Activated B cell treated with CpG ODN at 0.5 μM for 24 hours (primary cell): ENCODE measurements at regions of chr1 and their contacts with region 1.

Region 1: GRCh38 chr1:198638894-198639635 is at the start of gene PTPRC:
- DNase-seq: no peak
- ATAC-seq: peak; percentile 78
- H3K4me3 Mint-ChIP-seq: peak within 1 kb of the TSS; percentile 87
- H3K27ac Mint-ChIP-seq: peak within 1 kb of the TSS; percentile 95
- H3K4me1 Mint-ChIP-seq: peaks cover 68% of the 10 kb centered on the region
- H3K27me3 Mint-ChIP-seq: no peaks in the 10 kb centered on the region
- CTCF ChIP-seq: no peak
- total RNA-seq, gene PTPRC: 426 and 506 TPM in 2 replicates

Region 2: GRCh38 chr1:198520524-198521254 is 118.4 kb before region 1 on chr1:
- CTCF ChIA-PET with region 1: no interaction called
- POLR2A ChIA-PET with region 1: interaction called, 10 read pairs
- intact Hi-C with region 1: loop called (anchors 1 kb)
- DNase-seq: no peak
- ATAC-seq: peak; percentile 70
- H3K4me3 Mint-ChIP-seq: peak overlapping the region; percentile 69
- H3K27ac Mint-ChIP-seq: peak overlapping the region; percentile 81
- H3K4me1 Mint-ChIP-seq: peaks cover 63% of the 10 kb centered on the region
- H3K27me3 Mint-ChIP-seq: no peaks in the 10 kb centered on the region
- CTCF ChIP-seq: no peak

Region 3: GRCh38 chr1:198549866-198550265 is 89.2 kb before region 1 on chr1:
- CTCF ChIA-PET with region 1: no interaction called
- POLR2A ChIA-PET with region 1: interaction called, 6 read pairs
- intact Hi-C with region 1: loop called (anchors 1 kb)
- DNase-seq: no peak
- ATAC-seq: peak; percentile 90
- H3K4me3 Mint-ChIP-seq: peak overlapping the region; percentile 63
- H3K27ac Mint-ChIP-seq: peak overlapping the region; percentile 89
- H3K4me1 Mint-ChIP-seq: peaks cover 67% of the 10 kb centered on the region
- H3K27me3 Mint-ChIP-seq: no peaks in the 10 kb centered on the region
- CTCF ChIP-seq: no peak

Region 4: DNA sequence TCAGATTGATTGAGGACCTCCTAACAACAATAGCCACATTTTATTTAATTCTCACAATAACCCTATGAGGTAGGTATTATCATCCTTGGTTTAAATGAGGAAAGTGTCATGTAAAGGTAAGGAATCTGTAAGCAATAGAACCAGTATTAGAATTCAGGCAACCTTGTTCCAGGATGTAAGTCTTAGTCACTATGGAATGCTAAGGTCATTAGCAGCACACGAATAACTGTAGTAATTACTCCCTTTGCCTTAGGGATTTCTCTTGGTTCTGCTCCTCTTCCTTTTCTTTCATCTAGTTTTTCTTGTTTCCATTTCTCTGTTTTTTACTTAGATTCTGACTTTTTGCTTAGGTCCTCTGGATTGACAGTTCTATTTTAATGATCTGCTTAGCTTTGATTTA is 75.5 kb before region 1 on chr1:
- CTCF ChIA-PET with region 1: no interaction called
- POLR2A ChIA-PET with region 1: no interaction called
- intact Hi-C with region 1: no loop called
- DNase-seq: no peak
- ATAC-seq: no peak
- H3K4me3 Mint-ChIP-seq: no peak overlapping the region
- H3K27ac Mint-ChIP-seq: no peak overlapping the region
- H3K4me1 Mint-ChIP-seq: peaks cover 5% of the 10 kb centered on the region
- H3K27me3 Mint-ChIP-seq: no peaks in the 10 kb centered on the region
- CTCF ChIP-seq: no peak

Region 5: DNA sequence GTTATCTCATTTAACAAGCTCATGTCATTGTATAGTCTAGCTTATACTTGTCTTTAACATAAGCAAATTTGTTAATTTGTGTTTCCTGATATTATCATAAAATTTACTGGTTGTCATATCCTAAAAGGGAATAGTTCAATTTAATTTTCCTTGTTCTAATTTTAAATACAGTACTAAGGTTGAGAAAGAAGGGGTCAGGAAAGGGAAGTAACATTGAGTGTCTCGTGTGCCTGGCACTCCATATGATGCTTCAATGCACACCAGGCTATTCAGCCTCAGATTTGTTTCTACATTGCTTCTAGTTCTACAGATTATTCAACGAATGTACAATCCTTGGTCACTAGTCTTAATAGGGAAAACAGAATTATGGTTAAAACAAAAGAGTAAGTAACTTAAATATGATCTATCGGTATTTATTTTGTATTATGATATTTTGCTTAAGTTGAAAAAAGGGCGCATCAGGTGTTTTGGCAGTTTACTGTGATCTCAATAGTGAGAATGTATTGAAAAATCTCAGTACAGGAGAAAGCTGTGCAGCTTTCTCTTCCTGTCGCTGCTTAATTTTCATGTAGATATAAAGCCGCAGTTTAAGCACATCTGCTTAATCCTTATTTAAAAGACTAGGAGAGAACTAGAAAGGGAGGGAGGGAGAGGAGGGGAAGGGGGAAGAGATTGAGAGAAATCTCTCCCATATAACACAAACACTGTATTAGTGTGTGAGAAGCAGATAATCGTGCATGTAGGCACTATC is 12.8 kb after region 1 on chr1:
- CTCF ChIA-PET with region 1: no interaction called
- POLR2A ChIA-PET with region 1: interaction called, 21 read pairs
- intact Hi-C with region 1: loop called (anchors 1 kb)
- DNase-seq: no peak
- ATAC-seq: peak; percentile 69
- H3K4me3 Mint-ChIP-seq: peak overlapping the region; percentile 68
- H3K27ac Mint-ChIP-seq: peak overlapping the region; percentile 90
- H3K4me1 Mint-ChIP-seq: peaks cover 83% of the 10 kb centered on the region
- H3K27me3 Mint-ChIP-seq: no peaks in the 10 kb centered on the region
- CTCF ChIP-seq: no peak

Region 6: GRCh38 chr1:198657550-198658064 is 18.5 kb after region 1 on chr1:
- CTCF ChIA-PET with region 1: no interaction called
- POLR2A ChIA-PET with region 1: interaction called, 18 read pairs
- intact Hi-C with region 1: loop called (anchors 1 kb)
- DNase-seq: no peak
- ATAC-seq: peak; percentile 57
- H3K4me3 Mint-ChIP-seq: peak overlapping the region; percentile 56
- H3K27ac Mint-ChIP-seq: peak overlapping the region; percentile 84
- H3K4me1 Mint-ChIP-seq: peaks cover 78% of the 10 kb centered on the region
- H3K27me3 Mint-ChIP-seq: no peaks in the 10 kb centered on the region
- CTCF ChIP-seq: no peak

Region 7: DNA sequence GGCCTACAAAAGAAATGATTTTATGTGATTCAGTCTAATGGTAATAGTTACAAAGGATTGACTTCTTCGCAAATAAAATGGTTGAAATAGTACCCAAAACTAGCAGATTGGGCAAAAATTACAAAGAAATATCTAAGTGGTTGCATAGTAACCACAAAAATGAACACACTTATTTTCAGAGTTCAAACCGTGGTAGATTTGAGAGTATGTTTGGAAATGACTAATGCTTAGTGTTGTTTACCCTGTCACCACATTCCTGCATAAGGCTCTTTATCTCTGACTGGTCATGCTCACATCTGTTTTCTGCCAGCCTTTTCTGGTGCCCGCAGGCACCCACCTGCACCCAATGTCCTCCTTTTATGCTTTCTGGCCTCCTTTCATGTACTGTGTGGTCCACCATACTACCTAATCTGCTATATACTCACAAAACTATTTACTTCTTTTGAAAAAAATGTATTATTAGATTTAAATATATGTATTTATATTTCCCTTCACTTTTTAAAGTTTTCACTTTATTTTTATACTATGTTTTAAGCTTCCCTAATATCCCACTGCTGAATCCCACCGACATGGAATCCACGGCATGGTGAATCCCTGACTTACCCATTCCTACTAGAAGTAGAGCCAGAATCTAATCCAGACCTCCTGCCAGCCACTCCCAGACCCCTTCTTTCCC is 30.1 kb after region 1 on chr1:
- CTCF ChIA-PET with region 1: interaction called, 4 read pairs
- POLR2A ChIA-PET with region 1: interaction called, 54 read pairs
- intact Hi-C with region 1: no loop called
- DNase-seq: no peak
- ATAC-seq: peak; percentile 57
- H3K4me3 Mint-ChIP-seq: peak overlapping the region; percentile 42
- H3K27ac Mint-ChIP-seq: peak overlapping the region; percentile 88
- H3K4me1 Mint-ChIP-seq: peaks cover 89% of the 10 kb centered on the region
- H3K27me3 Mint-ChIP-seq: no peaks in the 10 kb centered on the region
- CTCF ChIP-seq: no peak